Kidney (tissue), 22 donors: ENCODE measurements at regions of chr2 and their contacts with region 1.

Region 1: DNA sequence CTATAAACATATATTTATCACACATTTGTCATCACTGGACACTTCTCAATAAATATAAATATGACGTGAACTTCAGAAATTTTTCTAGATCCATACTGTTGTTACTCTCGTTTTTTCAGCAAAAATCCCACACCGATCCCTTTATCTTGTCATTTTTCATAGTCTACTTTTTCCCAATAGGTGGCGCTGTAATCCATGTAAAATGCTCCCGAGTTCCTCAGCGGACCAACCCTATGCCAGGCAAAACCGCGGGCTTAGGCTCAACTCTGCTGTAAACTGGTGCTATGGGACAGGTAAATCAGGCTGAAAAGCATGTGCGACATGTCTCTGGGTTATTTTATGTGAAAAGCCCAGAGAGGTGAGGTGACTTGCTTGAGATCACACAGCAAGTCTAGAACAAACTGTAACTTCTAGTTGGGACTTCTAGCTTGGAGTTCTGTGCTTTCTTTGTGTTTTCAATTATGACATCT is 104.0 kb downstream of the COBLL1 start:
- DNase-seq: peak; percentile 65 to 88 (median 69)
- H3K4me3 ChIP-seq: no peak overlapping the region
- H3K27ac ChIP-seq: peak overlapping the region in 1 of 2 donors; percentile 52
- H3K4me1 ChIP-seq: peaks cover 0 to 16% (median 7%) of the 10 kb centered on the region in 3 donors
- H3K27me3 ChIP-seq: no peaks in the 10 kb centered on the region
- CTCF ChIP-seq: peak; percentile 71

Region 2: GRCh38 chr2:164661362-164661761 is 76.3 kb before region 1 on chr2:
- intact Hi-C with region 1: no loop called
- DNase-seq: no peak
- H3K4me3 ChIP-seq: no peak overlapping the region
- H3K27ac ChIP-seq: no peak overlapping the region
- H3K4me1 ChIP-seq: no peaks in the 10 kb centered on the region
- H3K27me3 ChIP-seq: no peaks in the 10 kb centered on the region
- CTCF ChIP-seq: no peak

Region 3: DNA sequence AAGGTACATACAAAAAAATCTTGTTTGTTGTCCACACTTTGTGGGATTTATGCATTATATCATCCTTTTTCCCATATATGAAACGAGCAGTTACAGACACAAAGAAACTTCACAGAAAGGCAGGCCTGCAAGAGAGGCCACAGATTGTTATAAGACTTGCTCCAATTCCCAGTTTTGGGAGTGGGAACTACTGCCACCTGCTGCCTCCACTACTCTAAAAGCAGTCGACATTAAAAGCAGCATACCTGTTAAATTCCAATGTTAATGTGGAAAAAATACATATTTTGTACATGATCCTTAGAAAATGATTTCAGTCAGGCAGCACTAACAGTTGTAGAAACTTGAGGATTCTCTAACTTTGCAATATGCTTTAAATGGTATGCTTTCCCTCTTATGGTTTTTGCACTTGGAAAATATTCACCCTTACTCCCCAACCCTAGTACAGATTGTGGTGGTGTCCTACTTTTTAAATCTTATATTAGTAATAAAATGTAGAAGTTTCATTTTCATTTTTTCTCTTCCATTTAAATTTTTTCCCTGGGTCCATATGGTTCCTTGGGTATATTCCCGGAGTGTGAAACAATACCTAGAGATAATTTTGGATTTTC is 179.8 kb after region 1 on chr2:
- intact Hi-C with region 1: loop called (anchors 10 kb)
- DNase-seq: peak in 4 of 5 donors; percentile 48 to 83 (median 64)
- H3K4me3 ChIP-seq: no peak overlapping the region
- H3K27ac ChIP-seq: peak overlapping the region in 1 of 2 donors; percentile 33
- H3K4me1 ChIP-seq: peaks cover 0 to 24% (median 4%) of the 10 kb centered on the region in 3 donors
- H3K27me3 ChIP-seq: no peaks in the 10 kb centered on the region
- CTCF ChIP-seq: peak; percentile 71